Activated naive CD4-positive, alpha-beta T cell treated with anti-CD3 and anti-CD28 coated beads for 36 hours (primary cell): ENCODE measurements at regions of chr1 and their contacts with region 1.

Region 1: DNA sequence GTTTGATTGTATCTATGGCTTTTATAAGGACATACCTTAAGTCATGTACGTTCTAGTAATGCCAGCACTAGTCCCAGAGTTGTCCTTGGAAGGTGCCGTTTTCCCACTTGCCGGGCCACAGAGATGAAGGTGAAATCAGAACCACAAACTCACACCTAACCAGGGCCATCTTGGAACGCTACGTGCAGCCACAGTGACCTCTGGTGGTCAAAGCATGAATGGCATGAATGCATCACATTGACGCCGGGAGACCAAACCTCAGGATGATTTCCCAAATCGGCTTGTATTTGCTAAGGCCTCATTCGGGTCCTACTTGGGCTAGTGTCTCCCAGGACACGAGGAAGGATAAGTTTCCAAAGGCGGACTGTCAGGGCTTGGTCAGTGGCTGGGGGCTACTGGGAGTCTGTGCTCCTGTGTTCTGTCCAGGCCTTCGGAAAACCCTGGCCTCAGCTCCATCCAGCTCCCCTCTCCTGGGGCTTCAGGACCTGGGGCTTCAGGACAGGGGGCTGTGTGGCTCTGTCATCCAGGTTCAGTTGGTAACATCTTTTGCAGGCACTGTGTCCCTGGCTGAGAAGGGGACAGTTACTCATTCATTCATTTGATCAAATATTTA is 260.5 kb downstream of the PRDM2 start:
- DNase-seq: peak; percentile 80
- H3K4me3 Mint-ChIP-seq: no peak overlapping the region
- H3K27ac Mint-ChIP-seq: no peak overlapping the region
- H3K4me1 Mint-ChIP-seq: no peaks in the 10 kb centered on the region
- H3K27me3 Mint-ChIP-seq: peaks cover 22% of the 10 kb centered on the region

Region 2: DNA sequence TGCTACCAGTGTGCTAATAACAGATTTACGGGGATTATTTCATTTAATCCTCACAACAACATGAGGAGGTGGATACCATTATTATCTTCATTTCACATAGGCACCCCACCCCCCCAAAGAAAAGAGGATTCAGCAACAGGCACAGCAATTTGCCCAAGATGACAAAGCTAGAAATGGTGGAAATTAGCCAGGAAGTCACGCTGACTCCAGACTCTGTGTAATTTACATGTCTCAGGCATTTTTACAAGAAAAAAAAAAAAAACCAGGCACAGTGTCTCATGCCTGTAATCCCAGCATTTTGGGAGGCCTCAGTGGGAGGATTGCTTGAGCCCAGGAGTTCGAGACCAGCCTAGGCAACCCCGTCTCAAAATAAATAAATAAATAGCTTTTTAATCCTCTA is 298.0 kb before region 1 on chr1:
- CTCF ChIA-PET with region 1: no interaction called
- intact Hi-C with region 1: loop called (anchors 2 kb)
- DNase-seq: no peak
- H3K4me3 Mint-ChIP-seq: no peak overlapping the region
- H3K27ac Mint-ChIP-seq: no peak overlapping the region
- H3K4me1 Mint-ChIP-seq: peaks cover 4% of the 10 kb centered on the region
- H3K27me3 Mint-ChIP-seq: peaks cover 5% of the 10 kb centered on the region

Region 3: GRCh38 chr1:13828454-13829151 is 131.9 kb before region 1 on chr1:
- CTCF ChIA-PET with region 1: interaction called, 10 read pairs
- intact Hi-C with region 1: loop called (anchors 1 kb)
- DNase-seq: peak; percentile 65
- H3K4me3 Mint-ChIP-seq: no peak overlapping the region
- H3K27ac Mint-ChIP-seq: no peak overlapping the region
- H3K4me1 Mint-ChIP-seq: no peaks in the 10 kb centered on the region
- H3K27me3 Mint-ChIP-seq: no peaks in the 10 kb centered on the region

Region 4: GRCh38 chr1:14015917-14016316 is 55.4 kb after region 1 on chr1:
- CTCF ChIA-PET with region 1: no interaction called
- intact Hi-C with region 1: no loop called
- DNase-seq: no peak
- H3K4me3 Mint-ChIP-seq: no peak overlapping the region
- H3K27ac Mint-ChIP-seq: no peak overlapping the region
- H3K4me1 Mint-ChIP-seq: no peaks in the 10 kb centered on the region
- H3K27me3 Mint-ChIP-seq: peaks cover 20% of the 10 kb centered on the region

Region 5: GRCh38 chr1:14220324-14220723 is 259.8 kb after region 1 on chr1:
- CTCF ChIA-PET with region 1: no interaction called
- intact Hi-C with region 1: no loop called
- DNase-seq: no peak
- H3K4me3 Mint-ChIP-seq: no peak overlapping the region
- H3K27ac Mint-ChIP-seq: no peak overlapping the region
- H3K4me1 Mint-ChIP-seq: no peaks in the 10 kb centered on the region
- H3K27me3 Mint-ChIP-seq: no peaks in the 10 kb centered on the region